Heart right ventricle (tissue), 16 donors: ENCODE measurements at regions of chr13 and their contacts with region 1.

Region 1: DNA sequence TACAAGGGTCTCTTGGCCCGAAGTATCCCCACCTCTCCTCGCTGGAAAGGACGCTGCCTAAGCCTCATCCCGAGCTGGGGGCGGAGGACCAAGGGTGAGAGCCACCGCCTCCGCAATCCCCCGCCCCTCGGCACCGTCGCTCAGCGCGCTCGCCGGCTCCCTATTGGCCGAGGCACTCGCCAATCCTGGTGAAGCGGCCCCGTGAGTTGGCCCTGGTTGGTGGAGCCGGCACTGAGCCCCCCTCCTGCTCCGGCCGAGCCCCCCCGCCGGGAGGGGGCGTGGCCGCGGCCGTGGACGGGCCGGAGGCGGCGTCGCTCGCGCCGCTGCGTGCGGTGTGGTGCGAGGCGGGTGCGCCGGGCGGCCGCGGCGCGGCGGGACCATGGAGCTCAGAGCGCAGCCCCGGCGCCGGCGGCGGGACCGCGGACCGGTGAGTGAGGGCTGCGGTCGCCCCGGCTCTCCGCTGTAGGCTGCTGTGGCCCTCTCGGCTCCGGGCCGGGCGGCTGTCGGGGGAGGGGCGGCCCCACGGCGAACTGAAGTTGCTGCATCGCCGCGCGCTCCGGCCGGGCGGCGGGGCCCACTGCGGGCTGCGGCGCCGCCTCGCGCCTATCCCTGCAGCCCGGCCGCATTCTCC is at the start of gene WASF3:
- DNase-seq: peak; percentile 95 to 96
- ATAC-seq: peak; percentile 99 to 100 (median 100)
- H3K4me3 ChIP-seq: peak within 1 kb of the TSS; percentile 58 to 93 (median 74)
- H3K27ac ChIP-seq: peak within 1 kb of the TSS in 8 of 10 donors; percentile 23 to 75 (median 54)
- H3K4me1 ChIP-seq: peaks cover 0 to 23% (median 7%) of the 10 kb centered on the region in 9 donors
- H3K27me3 ChIP-seq: peaks cover 0 to 47% (median 4%) of the 10 kb centered on the region in 7 donors
- CTCF ChIP-seq: no peak
- total RNA-seq, gene WASF3: 6.8 to 13.6 (median 9.1) TPM

Region 2: DNA sequence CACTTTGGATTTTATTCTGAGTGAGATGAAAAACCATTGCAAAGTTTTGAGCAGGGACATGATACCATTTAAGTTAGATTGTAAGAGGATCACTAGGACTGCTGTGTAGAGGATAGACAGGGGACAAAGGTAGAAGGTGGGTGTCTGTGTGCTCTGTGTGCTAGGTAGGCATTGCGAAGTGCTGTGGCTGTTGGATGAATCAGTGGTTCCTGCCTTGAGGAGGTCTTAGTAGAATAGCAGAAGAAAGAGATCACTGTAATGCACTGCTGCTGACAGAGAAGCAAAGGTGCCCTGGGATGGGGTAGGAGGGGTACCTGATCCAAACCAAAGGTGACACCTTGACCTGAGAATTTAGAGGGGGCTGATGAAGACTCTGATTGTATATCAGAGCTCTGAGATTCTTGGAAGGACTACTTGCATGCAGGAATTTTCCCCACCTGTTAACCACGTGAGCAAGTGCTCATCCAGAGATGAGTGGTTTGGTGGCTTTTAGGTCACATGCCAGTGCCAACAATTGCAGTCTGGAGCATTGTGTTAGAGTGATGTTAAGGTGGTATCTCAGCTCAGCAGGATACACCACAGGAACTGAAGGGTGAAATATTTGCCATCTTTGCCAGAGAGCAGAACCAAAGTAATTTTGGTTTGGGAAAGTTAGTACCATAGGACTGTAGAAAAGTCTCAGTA is 10.8 kb after region 1 on chr13:
- intact Hi-C with region 1: no loop called
- DNase-seq: no peak
- ATAC-seq: no peak
- H3K4me3 ChIP-seq: no peak overlapping the region
- H3K27ac ChIP-seq: no peak overlapping the region
- H3K4me1 ChIP-seq: no peaks in the 10 kb centered on the region
- H3K27me3 ChIP-seq: no peaks in the 10 kb centered on the region
- CTCF ChIP-seq: no peak

Region 3: DNA sequence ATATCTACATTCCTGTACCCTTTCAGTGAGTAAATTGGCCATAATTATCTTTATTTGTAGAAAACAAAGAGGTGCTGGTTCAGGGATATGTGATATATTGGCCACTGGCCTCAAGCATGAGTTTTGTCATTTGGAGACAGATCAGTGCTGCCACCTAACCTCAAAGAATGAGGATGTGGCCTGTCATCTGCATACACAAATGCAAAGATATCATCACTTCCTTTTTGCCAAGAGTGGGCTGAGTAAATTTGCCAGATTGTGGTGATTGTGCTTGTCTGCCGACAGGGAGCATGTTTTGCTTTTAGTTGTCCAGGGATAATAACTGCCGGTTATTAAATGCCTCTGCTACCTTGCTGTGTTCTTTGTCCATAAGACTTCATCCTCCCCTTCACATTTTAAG is 44.2 kb after region 1 on chr13:
- intact Hi-C with region 1: no loop called
- DNase-seq: no peak
- ATAC-seq: peak in 1 of 8 donors; percentile 47
- H3K4me3 ChIP-seq: no peak overlapping the region
- H3K27ac ChIP-seq: no peak overlapping the region
- H3K4me1 ChIP-seq: peaks cover 3 to 41% (median 21%) of the 10 kb centered on the region in 9 donors
- H3K27me3 ChIP-seq: no peaks in the 10 kb centered on the region
- CTCF ChIP-seq: peak in 3 of 9 donors; percentile 11 to 28 (median 12)

Region 4: DNA sequence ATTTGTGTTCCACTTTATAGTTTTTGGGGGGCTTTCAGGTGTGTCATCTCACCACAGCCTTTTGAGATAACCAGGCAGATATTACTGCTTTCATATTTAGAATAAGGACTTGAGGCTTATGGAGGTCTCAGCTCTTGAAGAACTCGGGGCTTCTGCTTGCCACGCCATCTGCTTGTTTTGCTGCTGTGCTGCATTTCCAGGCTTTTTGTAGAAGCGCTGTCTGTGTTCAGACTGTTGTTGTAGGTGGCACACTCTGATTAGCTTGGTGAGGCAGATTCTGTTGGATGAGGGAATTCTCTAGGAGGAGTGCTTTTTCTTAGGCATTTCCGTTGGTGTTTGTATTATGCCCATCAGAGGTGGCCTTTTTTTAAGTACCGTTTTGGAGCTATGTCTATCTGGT is 57.2 kb after region 1 on chr13:
- intact Hi-C with region 1: loop called in 1 of 10 experiments (anchors 5 kb)
- DNase-seq: no peak
- ATAC-seq: no peak
- H3K4me3 ChIP-seq: no peak overlapping the region
- H3K27ac ChIP-seq: no peak overlapping the region
- H3K4me1 ChIP-seq: no peaks in the 10 kb centered on the region
- H3K27me3 ChIP-seq: no peaks in the 10 kb centered on the region
- CTCF ChIP-seq: no peak

Region 5: GRCh38 chr13:26663791-26664190 is 106.3 kb after region 1 on chr13:
- intact Hi-C with region 1: loop called in 1 of 10 experiments (anchors 10 kb)
- DNase-seq: no peak
- ATAC-seq: no peak
- H3K4me3 ChIP-seq: no peak overlapping the region
- H3K27ac ChIP-seq: no peak overlapping the region
- H3K4me1 ChIP-seq: peaks cover 0 to 17% (median 3%) of the 10 kb centered on the region in 9 donors
- H3K27me3 ChIP-seq: no peaks in the 10 kb centered on the region
- CTCF ChIP-seq: no peak